ENCODE measurements at regions of chr1 and their contacts with region 1.

Region 1: DNA sequence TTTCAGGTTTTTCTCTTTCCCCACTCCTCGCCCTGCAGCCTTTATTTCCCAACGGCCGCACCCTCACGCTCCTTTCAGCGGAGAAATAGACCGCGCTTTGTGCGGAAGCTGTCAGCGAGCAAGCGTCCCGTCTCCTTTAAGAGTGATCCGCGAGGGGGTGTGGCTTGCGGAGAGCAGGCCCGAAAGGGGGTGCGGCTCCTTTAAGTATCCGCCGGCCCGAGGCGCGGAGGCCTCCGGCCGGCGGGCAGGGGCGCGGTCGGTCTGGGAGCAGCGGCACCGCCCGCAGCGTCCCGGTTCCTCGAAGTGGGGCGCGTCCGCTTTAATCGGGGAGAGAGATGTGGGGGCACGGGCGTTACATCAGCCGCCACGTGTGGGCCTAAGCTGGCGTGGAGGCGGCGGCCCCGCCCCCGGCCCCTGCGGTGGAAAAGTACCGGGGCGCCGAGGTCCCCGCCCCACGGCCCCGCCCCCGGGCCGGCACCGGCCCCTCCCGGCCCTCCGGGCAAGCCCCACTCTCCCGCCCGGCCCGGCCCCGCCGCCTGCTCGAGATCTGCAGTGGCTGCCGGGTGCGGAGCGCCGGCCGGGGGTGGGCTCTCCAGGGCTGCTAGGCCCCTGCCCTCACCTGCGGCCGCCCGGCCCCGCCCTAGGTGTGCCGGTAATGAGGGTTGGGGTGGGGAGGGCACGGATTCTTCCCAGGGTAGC is 1.2 kb downstream of the SLC6A9 start:
- DNase-seq: peak; percentile 92
- H3K4me3 Mint-ChIP-seq: peak overlapping the region; percentile 90
- H3K27ac Mint-ChIP-seq: peak overlapping the region; percentile 94
- H3K4me1 Mint-ChIP-seq: peaks cover 40% of the 10 kb centered on the region
- H3K27me3 Mint-ChIP-seq: no peaks in the 10 kb centered on the region
- CTCF ChIP-seq: no peak

Region 2: DNA sequence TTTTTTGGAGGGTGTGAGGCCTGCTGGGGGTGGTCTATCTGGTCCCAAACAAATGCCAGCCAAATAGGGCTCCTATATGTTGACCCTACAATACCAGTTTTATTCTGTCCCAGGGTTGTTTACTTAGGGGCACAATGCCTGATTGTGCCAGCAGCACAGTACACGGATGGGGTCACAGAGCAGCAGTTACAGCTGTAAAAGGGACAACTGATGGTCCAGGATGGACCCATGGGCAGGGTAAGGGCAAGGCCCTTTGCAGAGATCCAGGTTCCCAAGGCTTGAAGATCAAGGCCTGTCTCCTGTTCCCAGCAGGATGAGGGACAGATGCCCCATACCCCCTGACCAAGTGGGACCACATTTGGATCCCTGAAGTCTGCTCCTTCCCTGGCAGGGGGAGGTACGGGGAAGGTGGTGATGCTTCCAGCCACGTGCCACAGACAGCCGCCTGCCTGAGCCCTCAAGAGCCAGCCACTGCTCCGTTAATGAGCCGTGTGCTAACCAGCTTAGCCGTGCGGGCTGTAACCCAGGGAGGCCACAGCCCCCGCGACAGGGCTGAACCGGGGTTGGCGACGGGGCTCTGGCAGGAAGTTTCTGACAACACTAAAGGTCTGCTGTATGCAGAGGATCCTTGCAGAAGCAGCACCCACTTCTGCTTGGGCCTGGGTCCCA is 17.0 kb before region 1 on chr1:
- CTCF ChIA-PET with region 1: interaction called, 6 read pairs
- intact Hi-C with region 1: loop called (anchors 2 kb)
- DNase-seq: no peak
- H3K4me3 Mint-ChIP-seq: no peak overlapping the region
- H3K27ac Mint-ChIP-seq: no peak overlapping the region
- H3K4me1 Mint-ChIP-seq: peaks cover 9% of the 10 kb centered on the region
- H3K27me3 Mint-ChIP-seq: no peaks in the 10 kb centered on the region
- CTCF ChIP-seq: no peak

Measured in Calu3 (cell line).